BJ (cell line): ENCODE measurements at regions of chr1 and their contacts with region 1.

Region 1: GRCh38 chr1:54944610-54945544 is 35.6 kb upstream of the TMEM61 start:
- DNase-seq: peak; percentile 34
- H3K4me3 ChIP-seq: no peak overlapping the region
- H3K27me3 ChIP-seq: no peaks in the 10 kb centered on the region
- CTCF ChIP-seq: peak; percentile 84

Region 2: GRCh38 chr1:53732912-53733317 is 1212.0 kb before region 1 on chr1:
- CTCF ChIA-PET with region 1: no interaction called
- POLR2A ChIA-PET with region 1: no interaction called
- DNase-seq: peak; percentile 95
- H3K4me3 ChIP-seq: peak overlapping the region; percentile 14
- H3K27me3 ChIP-seq: no peaks in the 10 kb centered on the region
- CTCF ChIP-seq: no peak

Region 3: GRCh38 chr1:54581621-54582035 is 363.2 kb before region 1 on chr1:
- CTCF ChIA-PET with region 1: no interaction called
- POLR2A ChIA-PET with region 1: no interaction called
- DNase-seq: peak; percentile 9
- H3K4me3 ChIP-seq: no peak overlapping the region
- H3K27me3 ChIP-seq: no peaks in the 10 kb centered on the region
- CTCF ChIP-seq: no peak

Region 4: GRCh38 chr1:54904476-54905048 is 40.3 kb before region 1 on chr1:
- CTCF ChIA-PET with region 1: interaction called, 20 read pairs
- POLR2A ChIA-PET with region 1: no interaction called
- DNase-seq: peak; percentile 59
- H3K4me3 ChIP-seq: no peak overlapping the region
- H3K27me3 ChIP-seq: no peaks in the 10 kb centered on the region
- CTCF ChIP-seq: no peak

Region 5: DNA sequence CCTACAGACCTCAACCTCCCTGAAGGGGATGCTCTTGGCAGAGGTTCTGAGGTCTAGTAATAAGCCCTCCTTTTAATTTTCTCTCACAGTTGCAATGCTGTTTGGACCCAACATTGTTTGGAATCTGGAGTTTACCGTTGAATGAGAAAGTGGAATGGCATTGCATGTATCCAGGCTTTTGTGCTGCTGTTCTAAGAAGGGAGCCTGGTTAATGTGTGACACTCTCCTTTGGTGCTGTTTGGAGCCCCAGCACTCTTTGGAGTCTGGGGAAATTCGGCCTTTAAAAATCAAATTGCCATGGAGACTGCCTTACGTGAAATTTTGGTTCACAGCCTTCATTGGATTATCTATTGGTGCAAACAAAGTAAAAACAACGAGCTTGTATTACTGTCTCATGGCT is 11.8 kb after region 1 on chr1:
- CTCF ChIA-PET with region 1: interaction called, 20 read pairs
- POLR2A ChIA-PET with region 1: no interaction called
- DNase-seq: no peak
- H3K4me3 ChIP-seq: no peak overlapping the region
- H3K27me3 ChIP-seq: no peaks in the 10 kb centered on the region
- CTCF ChIP-seq: no peak

Region 6: DNA sequence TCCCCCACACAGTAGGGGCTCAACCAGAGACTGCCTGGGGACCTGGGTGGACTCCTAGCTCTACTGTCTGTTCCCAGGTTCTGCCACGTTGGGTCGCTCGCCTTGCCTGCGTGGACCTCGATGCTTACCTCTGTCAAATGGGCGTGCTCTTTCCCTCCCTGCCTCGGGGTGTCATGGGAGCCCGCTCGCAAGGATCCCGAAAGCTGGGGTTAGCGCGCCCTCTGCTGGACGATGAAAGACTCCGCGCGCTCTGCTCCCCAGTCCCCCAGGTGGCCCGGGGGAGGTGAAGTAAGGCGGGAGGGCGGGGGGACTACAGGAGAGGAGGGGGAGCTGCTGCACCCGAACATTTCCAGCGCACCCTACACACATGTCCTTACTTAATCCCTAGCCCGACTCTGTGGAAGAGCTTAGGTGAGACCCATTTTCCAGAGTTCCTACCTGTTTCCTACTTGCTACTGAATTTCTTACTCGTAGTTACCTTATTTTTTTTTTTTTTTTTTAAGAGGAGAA is 51.5 kb after region 1 on chr1:
- CTCF ChIA-PET with region 1: interaction called, 307 read pairs
- POLR2A ChIA-PET with region 1: no interaction called
- DNase-seq: no peak
- H3K4me3 ChIP-seq: no peak overlapping the region
- H3K27me3 ChIP-seq: peaks cover 10% of the 10 kb centered on the region
- CTCF ChIP-seq: peak; percentile 87